Activated naive CD4-positive, alpha-beta T cell treated with anti-CD3 and anti-CD28 coated beads for 36 hours (primary cell): ENCODE measurements at regions of chr4 and their contacts with region 1.

Region 1: DNA sequence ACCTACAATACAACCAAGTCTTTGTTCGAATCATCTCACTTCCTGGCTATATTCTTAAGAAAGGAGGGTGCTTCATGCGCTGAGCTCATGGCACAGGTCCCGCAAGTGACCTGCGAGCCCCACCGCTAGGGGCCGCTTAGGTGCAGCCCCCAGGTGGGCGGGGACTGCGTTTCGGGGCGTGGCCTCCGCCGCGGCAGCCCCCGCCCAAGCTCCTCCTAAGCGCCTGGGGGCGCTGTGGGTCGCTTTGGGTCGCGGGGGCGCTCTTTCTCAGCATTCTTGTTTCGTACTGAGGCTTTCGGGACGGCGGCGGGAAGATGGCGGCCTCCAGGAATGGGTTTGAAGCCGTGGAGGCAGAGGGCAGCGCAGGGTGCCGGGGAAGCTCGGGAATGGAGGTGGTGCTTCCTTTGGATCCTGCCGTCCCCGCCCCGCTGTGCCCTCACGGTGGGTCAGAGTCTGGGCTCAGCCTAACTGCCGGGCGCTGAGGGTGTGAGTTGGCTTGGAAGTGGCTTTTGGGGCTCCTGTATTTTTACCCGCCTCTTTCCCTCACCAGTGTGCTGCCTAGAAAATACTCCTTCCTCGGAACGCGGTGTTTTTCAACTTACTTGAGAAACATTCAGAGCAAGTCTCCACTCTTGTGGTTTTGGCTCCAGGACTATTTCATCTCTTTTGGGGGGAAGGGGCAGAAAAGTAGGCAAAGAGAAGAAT is at the start of gene ZCCHC4:
- DNase-seq: peak; percentile 88
- H3K4me3 Mint-ChIP-seq: peak within 1 kb of the TSS; percentile 99
- H3K27ac Mint-ChIP-seq: peak within 1 kb of the TSS; percentile 89
- H3K4me1 Mint-ChIP-seq: peaks cover 22% of the 10 kb centered on the region
- H3K27me3 Mint-ChIP-seq: peaks cover 8% of the 10 kb centered on the region
- total RNA-seq, gene ZCCHC4: 10.5 to 11.9 TPM

Region 2: GRCh38 chr4:24472514-24473308 is 839.9 kb before region 1 on chr4:
- CTCF ChIA-PET with region 1: no interaction called
- intact Hi-C with region 1: loop called (anchors 5 kb)
- DNase-seq: peak; percentile 47
- H3K4me3 Mint-ChIP-seq: peak overlapping the region; percentile 83
- H3K27ac Mint-ChIP-seq: no peak overlapping the region
- H3K4me1 Mint-ChIP-seq: peaks cover 29% of the 10 kb centered on the region
- H3K27me3 Mint-ChIP-seq: peaks cover 64% of the 10 kb centered on the region

Region 3: GRCh38 chr4:25159884-25160713 is 152.5 kb before region 1 on chr4 and contains the start of gene SEPSECS:
- CTCF ChIA-PET with region 1: interaction called, 19 read pairs
- intact Hi-C with region 1: loop called (anchors 1 kb)
- DNase-seq: peak; percentile 97
- H3K4me3 Mint-ChIP-seq: peak within 1 kb of the TSS; percentile 93
- H3K27ac Mint-ChIP-seq: peak within 1 kb of the TSS; percentile 99
- H3K4me1 Mint-ChIP-seq: peaks cover 34% of the 10 kb centered on the region
- H3K27me3 Mint-ChIP-seq: no peaks in the 10 kb centered on the region
- total RNA-seq, gene SEPSECS: 14.7 to 17.9 TPM

Region 4: GRCh38 chr4:25234390-25235370 is 78.0 kb before region 1 on chr4:
- CTCF ChIA-PET with region 1: interaction called, 18 read pairs
- intact Hi-C with region 1: loop called (anchors 1 kb)
- DNase-seq: peak; percentile 63
- H3K4me3 Mint-ChIP-seq: peak overlapping the region; percentile 92
- H3K27ac Mint-ChIP-seq: peak overlapping the region; percentile 91
- H3K4me1 Mint-ChIP-seq: peaks cover 40% of the 10 kb centered on the region
- H3K27me3 Mint-ChIP-seq: no peaks in the 10 kb centered on the region

Region 5: GRCh38 chr4:25284466-25284865 is 28.2 kb before region 1 on chr4:
- CTCF ChIA-PET with region 1: no interaction called
- intact Hi-C with region 1: no loop called
- DNase-seq: no peak
- H3K4me3 Mint-ChIP-seq: no peak overlapping the region
- H3K27ac Mint-ChIP-seq: no peak overlapping the region
- H3K4me1 Mint-ChIP-seq: no peaks in the 10 kb centered on the region
- H3K27me3 Mint-ChIP-seq: peaks cover 6% of the 10 kb centered on the region

Region 6: GRCh38 chr4:25330905-25331808 is 18.5 kb after region 1 on chr4:
- CTCF ChIA-PET with region 1: interaction called, 32 read pairs
- intact Hi-C with region 1: no loop called
- DNase-seq: no peak
- H3K4me3 Mint-ChIP-seq: peak overlapping the region; percentile 53
- H3K27ac Mint-ChIP-seq: peak overlapping the region; percentile 62
- H3K4me1 Mint-ChIP-seq: peaks cover 17% of the 10 kb centered on the region
- H3K27me3 Mint-ChIP-seq: no peaks in the 10 kb centered on the region

Region 7: GRCh38 chr4:25376754-25377571 is 64.3 kb after region 1 on chr4 and contains the start of gene ANAPC4:
- CTCF ChIA-PET with region 1: interaction called, 6 read pairs
- intact Hi-C with region 1: loop called (anchors 1 kb)
- DNase-seq: peak; percentile 95
- H3K4me3 Mint-ChIP-seq: no peak within 1 kb of the TSS
- H3K27ac Mint-ChIP-seq: peak within 1 kb of the TSS; percentile 78
- H3K4me1 Mint-ChIP-seq: peaks cover 9% of the 10 kb centered on the region
- H3K27me3 Mint-ChIP-seq: no peaks in the 10 kb centered on the region
- total RNA-seq, gene ANAPC4: 23.1 to 27.3 TPM

Region 8: DNA sequence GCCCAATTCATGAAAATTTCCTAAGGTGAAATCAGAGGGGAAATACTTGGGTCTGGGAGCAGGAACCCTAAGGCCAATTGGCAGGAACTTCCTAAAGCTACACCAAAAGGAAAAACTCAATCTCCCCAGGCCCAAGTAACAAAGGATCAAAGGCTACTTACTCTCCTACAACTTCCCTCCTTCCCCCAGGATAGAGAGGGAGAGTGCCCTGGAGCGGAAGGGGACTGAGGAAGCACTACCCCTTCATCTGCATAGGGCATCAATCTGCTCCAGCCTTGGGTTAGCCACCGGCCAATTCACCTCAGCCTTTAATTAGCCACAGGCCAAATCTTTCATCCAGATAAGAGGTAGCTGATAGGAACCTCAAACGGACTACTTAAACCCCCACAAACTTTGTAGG is 398.0 kb after region 1 on chr4:
- CTCF ChIA-PET with region 1: no interaction called
- intact Hi-C with region 1: no loop called
- DNase-seq: no peak
- H3K4me3 Mint-ChIP-seq: no peak overlapping the region
- H3K27ac Mint-ChIP-seq: no peak overlapping the region
- H3K4me1 Mint-ChIP-seq: no peaks in the 10 kb centered on the region
- H3K27me3 Mint-ChIP-seq: no peaks in the 10 kb centered on the region

Region 9: DNA sequence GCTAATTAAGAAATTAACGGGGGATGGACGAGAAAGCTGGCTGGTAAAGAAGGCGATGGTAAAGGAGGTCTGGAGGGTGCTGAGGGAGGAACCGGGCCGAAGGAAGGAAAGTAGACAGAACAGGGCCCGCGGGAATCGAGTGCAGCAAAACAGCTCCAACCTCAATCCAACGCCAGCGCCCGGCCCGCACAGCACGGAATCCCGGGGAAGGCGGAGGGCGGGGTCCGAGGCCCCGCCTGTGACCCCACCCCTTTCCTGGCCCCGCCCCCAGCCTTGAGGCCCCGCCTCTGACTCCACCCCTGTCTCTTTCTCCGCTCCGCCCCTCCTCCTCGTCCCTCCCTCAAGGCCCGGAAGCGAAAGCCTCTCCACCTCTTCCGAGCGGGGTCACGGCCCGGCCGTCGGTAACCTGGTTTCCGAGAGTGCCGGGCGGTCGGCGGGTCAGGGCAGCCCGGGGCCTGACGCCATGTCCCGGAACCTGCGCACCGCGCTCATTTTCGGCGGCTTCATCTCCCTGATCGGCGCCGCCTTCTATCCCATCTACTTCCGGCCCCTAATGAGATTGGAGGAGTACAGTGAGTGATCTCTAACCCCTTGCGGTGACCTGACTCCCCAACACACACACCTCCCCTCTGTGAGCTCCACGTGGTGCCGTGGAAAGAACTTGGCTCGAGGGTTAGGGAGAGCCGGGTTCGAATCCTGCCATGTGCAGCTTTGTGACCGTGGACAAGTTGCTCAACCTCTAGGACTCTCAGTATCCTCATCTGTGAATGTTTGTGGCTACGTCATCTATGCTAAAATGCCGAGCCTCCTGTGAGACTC is 601.4 kb after region 1 on chr4 and contains the start of gene SMIM20:
- CTCF ChIA-PET with region 1: no interaction called
- intact Hi-C with region 1: loop called (anchors 1 kb)
- DNase-seq: peak; percentile 89
- H3K4me3 Mint-ChIP-seq: peak within 1 kb of the TSS; percentile 96
- H3K27ac Mint-ChIP-seq: peak within 1 kb of the TSS; percentile 97
- H3K4me1 Mint-ChIP-seq: peaks cover 17% of the 10 kb centered on the region
- H3K27me3 Mint-ChIP-seq: no peaks in the 10 kb centered on the region
- total RNA-seq, gene SMIM20: 28.1 to 33.2 TPM